Heart right ventricle (tissue), 16 donors: ENCODE measurements at regions of chr19 and their contacts with region 1.

Region 1: GRCh38 chr19:43784981-43785808 is 4.4 kb upstream of the KCNN4 start:
- DNase-seq: peak in 1 of 2 donors; percentile 50
- ATAC-seq: peak; percentile 59 to 90 (median 83)
- H3K4me3 ChIP-seq: no peak overlapping the region
- H3K27ac ChIP-seq: peak overlapping the region in 1 of 10 donors; percentile 70
- H3K4me1 ChIP-seq: peaks cover 0 to 28% (median 2%) of the 10 kb centered on the region in 9 donors
- H3K27me3 ChIP-seq: peaks cover 0 to 35% (median 18%) of the 10 kb centered on the region in 7 donors
- CTCF ChIP-seq: peak; percentile 94 to 99 (median 96)

Region 2: GRCh38 chr19:43545981-43546380 is 239.2 kb before region 1 on chr19:
- intact Hi-C with region 1: loop called in 2 of 10 experiments (anchors 10 kb)
- DNase-seq: no peak
- ATAC-seq: peak in 1 of 8 donors; percentile 16
- H3K4me3 ChIP-seq: no peak overlapping the region
- H3K27ac ChIP-seq: no peak overlapping the region
- H3K4me1 ChIP-seq: no peaks in the 10 kb centered on the region
- H3K27me3 ChIP-seq: no peaks in the 10 kb centered on the region
- CTCF ChIP-seq: no peak

Region 3: GRCh38 chr19:43555185-43555770 is 229.9 kb before region 1 on chr19:
- intact Hi-C with region 1: loop called in 1 of 10 experiments (anchors 10 kb)
- DNase-seq: peak in 1 of 2 donors; percentile 69
- ATAC-seq: peak in 6 of 8 donors; percentile 38 to 62 (median 50)
- H3K4me3 ChIP-seq: no peak overlapping the region
- H3K27ac ChIP-seq: no peak overlapping the region
- H3K4me1 ChIP-seq: no peaks in the 10 kb centered on the region
- H3K27me3 ChIP-seq: no peaks in the 10 kb centered on the region
- CTCF ChIP-seq: peak in 8 of 9 donors; percentile 44 to 76 (median 62)

Region 4: DNA sequence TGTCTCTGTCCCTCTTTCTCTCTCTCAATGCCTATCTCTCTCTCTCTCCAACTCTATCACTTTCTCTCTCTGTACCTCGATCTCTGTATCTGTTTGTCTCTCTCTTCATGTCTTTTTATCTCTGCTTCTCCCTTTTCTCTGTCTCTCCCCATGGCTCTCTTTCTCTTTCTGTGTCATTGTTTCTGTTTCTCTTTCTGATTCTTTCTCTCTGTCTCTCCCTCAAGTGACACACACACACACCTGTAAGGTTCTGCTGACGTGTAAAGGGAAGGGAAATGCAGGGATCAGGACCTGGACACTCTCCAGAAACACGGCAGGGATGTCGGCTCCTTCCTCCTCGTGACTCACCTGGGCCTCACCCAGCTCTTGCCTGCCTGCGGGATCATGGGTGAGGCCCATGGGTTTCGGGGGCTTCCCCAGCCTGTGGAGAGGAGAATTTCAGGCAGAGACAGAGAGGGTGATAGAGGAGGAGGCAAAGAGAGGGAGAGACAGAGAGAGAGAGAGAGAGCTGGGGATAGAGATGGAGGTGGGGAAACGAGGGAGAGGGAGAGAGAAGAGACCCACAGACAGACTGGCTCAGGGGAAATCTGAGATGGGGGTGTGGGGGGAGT is 109.8 kb before region 1 on chr19:
- intact Hi-C with region 1: loop called in 1 of 10 experiments (anchors 10 kb)
- DNase-seq: no peak
- ATAC-seq: no peak
- H3K4me3 ChIP-seq: no peak overlapping the region
- H3K27ac ChIP-seq: peak overlapping the region in 2 of 10 donors; percentile 74 to 87
- H3K4me1 ChIP-seq: peaks cover 0 to 47% (median 3%) of the 10 kb centered on the region in 9 donors
- H3K27me3 ChIP-seq: no peaks in the 10 kb centered on the region
- CTCF ChIP-seq: no peak

Region 5: GRCh38 chr19:43743022-43743421 is 42.2 kb before region 1 on chr19:
- intact Hi-C with region 1: loop called (anchors 1 to 5 kb)
- DNase-seq: no peak
- ATAC-seq: no peak
- H3K4me3 ChIP-seq: no peak overlapping the region
- H3K27ac ChIP-seq: peak overlapping the region in 1 of 10 donors; percentile 9
- H3K4me1 ChIP-seq: peaks cover 0 to 32% (median 0%) of the 10 kb centered on the region in 9 donors
- H3K27me3 ChIP-seq: no peaks in the 10 kb centered on the region
- CTCF ChIP-seq: no peak

Region 6: DNA sequence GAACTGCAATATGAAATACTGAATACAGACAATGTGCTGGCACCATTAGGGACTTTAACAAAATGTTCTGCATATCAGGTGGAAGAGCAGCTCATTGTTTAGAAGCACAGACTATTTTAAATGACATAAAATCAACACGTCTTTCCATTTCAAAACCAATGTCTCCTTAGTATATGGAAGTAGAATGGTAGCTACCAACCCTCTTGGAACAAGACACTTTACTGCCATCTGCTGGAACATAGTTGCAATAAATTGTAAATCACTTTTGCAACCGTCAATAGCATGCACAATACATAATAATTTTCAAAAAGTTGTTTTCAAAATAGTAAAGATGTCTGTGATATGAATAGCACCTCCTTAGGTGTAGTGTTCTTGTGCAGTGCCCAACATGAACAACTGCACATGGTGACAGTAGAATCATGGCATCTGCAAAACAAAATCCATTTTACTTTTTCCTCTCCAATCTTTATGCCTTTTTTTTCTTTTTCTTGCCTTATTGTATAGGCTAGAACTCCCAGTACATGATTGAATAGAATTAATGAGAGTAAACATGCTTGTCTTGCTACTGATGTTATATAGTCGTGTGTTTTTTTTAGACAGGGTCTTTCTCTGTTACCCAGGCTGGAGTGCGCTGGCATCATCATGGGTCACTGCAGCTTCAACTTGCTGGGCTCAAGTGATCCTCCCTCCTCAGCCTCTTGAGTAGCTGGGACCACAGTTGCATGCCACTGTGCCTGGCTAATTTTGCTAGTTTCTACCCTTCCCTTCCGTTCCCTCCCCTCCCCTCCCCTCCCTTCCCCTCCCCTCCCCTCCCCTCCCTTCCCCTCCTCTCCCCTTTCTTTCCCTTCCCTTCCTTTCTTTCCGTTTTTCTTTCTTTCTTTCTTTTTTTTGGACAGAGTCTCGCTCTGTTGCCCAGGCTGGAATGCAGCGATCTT is 24.8 kb after region 1 on chr19:
- intact Hi-C with region 1: no loop called
- DNase-seq: no peak
- ATAC-seq: peak in 2 of 8 donors; percentile 45 to 47
- H3K4me3 ChIP-seq: no peak overlapping the region
- H3K27ac ChIP-seq: no peak overlapping the region
- H3K4me1 ChIP-seq: no peaks in the 10 kb centered on the region
- H3K27me3 ChIP-seq: peaks cover 0 to 18% (median 0%) of the 10 kb centered on the region in 7 donors
- CTCF ChIP-seq: peak in 8 of 9 donors; percentile 24 to 69 (median 61)

Region 7: DNA sequence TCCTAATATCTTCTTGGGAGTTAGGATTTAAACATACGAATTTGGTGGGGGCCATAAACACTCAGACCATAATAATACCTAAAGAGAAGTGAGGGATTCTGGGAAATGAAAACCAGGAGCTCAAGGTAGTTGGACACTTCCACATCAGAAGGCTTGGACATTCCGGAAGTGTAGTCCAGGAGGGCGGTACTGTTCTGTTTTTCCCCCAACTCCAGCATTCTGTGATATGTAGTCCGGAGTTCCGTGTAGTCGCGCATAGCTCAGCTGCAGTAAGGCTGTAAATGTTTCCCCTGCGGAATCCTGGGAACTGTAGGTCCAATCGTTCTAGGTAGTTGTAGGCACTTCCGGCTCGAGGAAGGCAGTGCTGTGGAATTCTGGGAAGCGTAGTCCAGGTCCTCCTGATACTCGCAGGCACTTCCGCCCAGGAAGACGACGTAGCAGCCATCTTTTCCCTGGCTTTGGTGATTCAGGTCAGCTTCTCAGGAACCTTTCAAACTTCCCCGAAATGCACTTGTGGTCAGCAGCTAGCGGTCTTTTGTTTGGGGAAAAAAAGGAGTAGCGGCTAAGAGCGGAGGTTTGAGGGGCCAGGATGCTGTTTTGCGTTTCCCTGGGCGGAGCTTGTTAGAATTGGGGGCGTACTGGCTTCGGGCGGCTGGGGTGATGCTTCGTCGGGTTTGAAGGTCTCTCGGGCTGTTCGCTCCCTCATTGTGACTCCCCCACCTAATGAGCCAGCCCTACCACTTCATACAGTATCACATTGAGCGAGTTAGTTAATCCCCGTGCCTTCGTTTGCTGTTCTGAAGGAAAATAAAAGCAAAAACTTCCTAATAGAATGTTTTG is 379.7 kb after region 1 on chr19 and contains the start of gene ZNF226:
- intact Hi-C with region 1: no loop called
- DNase-seq: peak; percentile 76 to 95
- ATAC-seq: peak; percentile 99 to 100 (median 100)
- H3K4me3 ChIP-seq: peak within 1 kb of the TSS; percentile 55 to 86 (median 71)
- H3K27ac ChIP-seq: peak within 1 kb of the TSS; percentile 31 to 92 (median 86)
- H3K4me1 ChIP-seq: peaks cover 0 to 17% (median 12%) of the 10 kb centered on the region in 9 donors
- H3K27me3 ChIP-seq: no peaks in the 10 kb centered on the region
- CTCF ChIP-seq: no peak
- total RNA-seq, gene ZNF226: 17.0 to 30.6 (median 22.6) TPM